Transverse colon (tissue), 4 donors: ENCODE measurements at regions of chr20 and their contacts with region 1.

Region 1: GRCh38 chr20:32521780-32522525 is 63.2 kb downstream of the NOL4L start:
- DNase-seq: peak; percentile 74
- H3K4me3 ChIP-seq: no peak overlapping the region
- H3K27ac ChIP-seq: no peak overlapping the region
- H3K4me1 ChIP-seq: peaks cover 0 to 12% (median 0%) of the 10 kb centered on the region in 4 donors
- H3K27me3 ChIP-seq: no peaks in the 10 kb centered on the region
- CTCF ChIP-seq: peak; percentile 82 to 88 (median 87)
- EP300 ChIP-seq: no peak
- POLR2A ChIP-seq: no peak

Region 2: DNA sequence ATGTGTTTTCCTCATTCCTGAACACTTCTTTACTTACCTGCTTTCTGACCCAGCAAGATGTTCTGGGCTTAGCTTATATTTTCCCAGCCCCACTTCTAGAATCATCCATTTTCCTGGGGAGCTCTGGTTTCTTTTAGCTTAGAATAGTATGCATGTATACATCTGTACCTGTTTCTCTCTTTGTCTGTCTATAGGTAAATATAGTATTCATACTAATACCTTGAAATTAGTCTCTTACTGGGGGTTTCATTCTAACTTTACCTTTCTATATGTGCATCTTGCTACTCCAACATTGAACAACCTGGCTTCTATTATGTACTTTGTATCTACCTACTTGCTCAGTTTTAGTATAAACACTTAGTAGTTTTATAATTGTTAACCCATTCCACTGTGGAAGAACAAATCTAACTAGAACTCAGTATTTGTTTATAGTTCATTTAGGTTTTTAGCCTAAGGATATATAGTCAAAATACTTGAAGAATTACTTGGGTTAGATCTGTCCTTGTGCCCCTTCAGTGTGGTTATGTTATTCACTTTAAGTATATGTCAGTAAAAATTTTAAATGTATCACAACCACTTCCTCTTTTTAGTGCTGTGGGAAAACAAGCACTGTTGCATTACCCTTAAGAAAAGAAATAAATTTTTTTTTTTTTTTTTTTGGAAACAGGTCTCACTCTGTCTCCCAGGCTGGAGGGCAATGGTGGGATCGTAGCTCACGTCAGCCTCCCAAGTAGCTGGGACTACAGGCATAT is 109.8 kb before region 1 on chr20:
- in situ Hi-C with region 1: no loop called
- intact Hi-C with region 1: no loop called
- DNase-seq: no peak
- H3K4me3 ChIP-seq: no peak overlapping the region
- H3K27ac ChIP-seq: no peak overlapping the region
- H3K4me1 ChIP-seq: peaks cover 0 to 16% (median 2%) of the 10 kb centered on the region in 4 donors
- H3K27me3 ChIP-seq: no peaks in the 10 kb centered on the region
- CTCF ChIP-seq: no peak
- EP300 ChIP-seq: no peak
- POLR2A ChIP-seq: no peak

Region 3: GRCh38 chr20:32474967-32475811 is 46.8 kb before region 1 on chr20:
- in situ Hi-C with region 1: no loop called
- intact Hi-C with region 1: no loop called
- DNase-seq: peak; percentile 94
- H3K4me3 ChIP-seq: peak overlapping the region in 3 of 4 donors; percentile 11 to 45 (median 31)
- H3K27ac ChIP-seq: peak overlapping the region; percentile 93 to 97 (median 96)
- H3K4me1 ChIP-seq: peaks cover 73 to 100% (median 91%) of the 10 kb centered on the region in 4 donors
- H3K27me3 ChIP-seq: no peaks in the 10 kb centered on the region
- CTCF ChIP-seq: no peak
- EP300 ChIP-seq: peak; percentile 0
- POLR2A ChIP-seq: peak; percentile 74

Region 4: DNA sequence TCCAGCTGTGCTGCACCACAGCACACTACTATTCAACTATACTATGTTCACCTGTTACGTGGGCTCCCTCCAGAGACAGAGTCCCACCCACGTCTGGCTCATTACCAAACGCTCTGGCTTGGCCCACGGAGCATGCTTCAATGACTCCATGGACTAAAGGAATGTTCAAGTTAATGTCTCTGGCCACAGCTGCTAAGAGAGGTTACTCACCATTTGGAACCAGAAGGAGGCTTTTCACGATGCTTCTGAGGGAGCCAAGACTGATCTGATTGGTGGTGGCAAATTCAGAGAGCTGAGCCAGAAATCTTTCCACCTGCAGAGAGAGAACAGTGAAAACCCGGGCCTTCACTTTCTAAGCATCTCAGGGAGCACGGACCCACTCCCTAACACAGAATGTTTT is 205.7 kb after region 1 on chr20:
- in situ Hi-C with region 1: no loop called
- intact Hi-C with region 1: no loop called
- DNase-seq: no peak
- H3K4me3 ChIP-seq: no peak overlapping the region
- H3K27ac ChIP-seq: no peak overlapping the region
- H3K4me1 ChIP-seq: peaks cover 0 to 12% (median 9%) of the 10 kb centered on the region in 4 donors
- H3K27me3 ChIP-seq: no peaks in the 10 kb centered on the region
- CTCF ChIP-seq: no peak
- EP300 ChIP-seq: no peak
- POLR2A ChIP-seq: no peak

Region 5: GRCh38 chr20:32789896-32790750 is 268.2 kb after region 1 on chr20:
- in situ Hi-C with region 1: loop called in 1 of 4 experiments (anchors 25 kb)
- intact Hi-C with region 1: no loop called
- DNase-seq: peak; percentile 76
- H3K4me3 ChIP-seq: no peak overlapping the region
- H3K27ac ChIP-seq: no peak overlapping the region
- H3K4me1 ChIP-seq: no peaks in the 10 kb centered on the region
- H3K27me3 ChIP-seq: no peaks in the 10 kb centered on the region
- CTCF ChIP-seq: peak; percentile 92 to 99 (median 99)
- EP300 ChIP-seq: no peak
- POLR2A ChIP-seq: no peak